ENCODE measurements at regions of chr9 and their contacts with region 1.

Region 1: GRCh38 chr9:27212191-27212590 is 84.8 kb downstream of the EQTN start:
- DNase-seq: no peak

Region 2: GRCh38 chr9:27165670-27166069 is 46.5 kb before region 1 on chr9:
- intact Hi-C with region 1: loop called (anchors 5 kb)
- DNase-seq: no peak

Measured in cardiac septum (tissue), 1 donor.